ENCODE measurements at regions of chr15 and their contacts with region 1.

Region 1: DNA sequence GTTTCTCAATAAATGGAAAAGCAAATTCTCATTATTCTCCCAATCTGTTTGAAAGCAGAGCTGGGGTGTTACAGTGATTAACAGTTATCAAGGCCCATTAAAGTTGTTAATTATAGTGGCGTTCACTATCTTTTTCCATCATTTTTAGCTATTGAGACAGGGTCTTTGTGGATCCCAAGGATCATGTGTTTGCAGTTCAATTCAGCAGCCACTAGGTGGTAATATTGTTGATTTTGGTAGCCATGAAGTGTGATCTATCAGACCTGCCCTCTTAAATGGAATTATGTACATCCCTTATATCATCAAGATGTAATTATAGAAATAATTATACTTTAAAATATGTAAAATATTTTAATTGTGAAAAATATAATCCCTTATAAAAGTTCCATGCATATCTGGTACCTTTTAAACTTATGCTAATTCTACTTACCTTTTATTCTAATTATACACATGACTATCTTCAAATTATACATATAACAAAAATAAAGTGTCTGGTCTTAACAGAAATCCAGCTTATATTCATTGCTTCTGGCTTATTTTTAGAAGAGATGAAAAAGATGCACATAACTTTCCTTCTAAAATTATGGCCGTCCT is 126.4 kb downstream of the GREM1 start:
- DNase-seq: no peak
- H3K4me3 ChIP-seq: no peak overlapping the region
- CTCF ChIP-seq: peak; percentile 69

Region 2: DNA sequence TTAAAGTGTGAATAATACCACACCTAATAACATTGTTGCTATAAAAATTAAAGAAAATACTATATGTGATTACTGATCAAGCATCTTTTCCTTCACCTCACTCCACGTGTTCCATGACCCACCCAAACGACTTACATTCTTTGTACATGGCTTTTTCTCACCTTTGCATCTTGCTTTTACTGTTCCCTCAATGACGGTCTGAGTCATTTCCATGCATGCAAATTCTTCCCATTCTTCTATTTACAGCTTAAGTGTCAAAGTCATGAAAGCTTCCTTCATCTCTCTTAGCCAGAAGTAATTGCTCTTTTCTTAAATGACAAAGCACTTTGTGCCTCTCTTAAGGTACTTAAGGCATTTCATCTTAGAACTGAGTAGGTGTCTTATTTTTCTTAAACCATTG is 62.4 kb before region 1 on chr15:
- in situ Hi-C with region 1: no loop called
- DNase-seq: no peak
- H3K4me3 ChIP-seq: no peak overlapping the region
- CTCF ChIP-seq: no peak

Region 3: DNA sequence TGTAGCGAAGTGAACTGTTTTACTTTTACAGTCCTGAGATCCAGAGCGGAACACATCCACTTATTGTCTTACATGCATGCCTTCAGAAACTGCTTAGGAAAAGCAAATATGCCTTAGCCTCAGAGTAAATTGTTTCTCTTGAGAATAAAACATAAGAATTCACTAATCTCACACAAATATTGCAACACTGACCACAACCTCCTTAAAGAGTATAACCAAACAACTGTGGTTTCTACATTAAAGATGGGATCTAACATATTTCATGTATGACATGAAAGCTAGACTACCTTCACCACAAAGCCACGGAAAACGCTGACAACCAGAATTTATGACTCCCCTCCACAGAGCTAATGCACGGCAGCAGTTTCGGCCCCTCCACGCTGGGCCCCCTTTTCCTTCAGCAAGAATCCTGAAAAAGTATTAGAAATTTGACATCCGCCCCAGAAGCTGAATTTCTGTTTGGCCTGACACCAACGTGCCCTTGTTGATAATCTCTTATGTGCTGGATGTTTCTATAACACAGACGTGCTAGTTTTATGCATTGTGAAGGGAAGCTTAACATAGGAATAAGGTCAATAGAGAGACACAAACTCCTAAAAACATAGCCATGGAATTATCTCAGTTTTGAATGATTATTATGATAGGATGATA is 41.8 kb before region 1 on chr15:
- in situ Hi-C with region 1: no loop called
- DNase-seq: peak; percentile 96
- H3K4me3 ChIP-seq: no peak overlapping the region
- CTCF ChIP-seq: no peak

Region 4: DNA sequence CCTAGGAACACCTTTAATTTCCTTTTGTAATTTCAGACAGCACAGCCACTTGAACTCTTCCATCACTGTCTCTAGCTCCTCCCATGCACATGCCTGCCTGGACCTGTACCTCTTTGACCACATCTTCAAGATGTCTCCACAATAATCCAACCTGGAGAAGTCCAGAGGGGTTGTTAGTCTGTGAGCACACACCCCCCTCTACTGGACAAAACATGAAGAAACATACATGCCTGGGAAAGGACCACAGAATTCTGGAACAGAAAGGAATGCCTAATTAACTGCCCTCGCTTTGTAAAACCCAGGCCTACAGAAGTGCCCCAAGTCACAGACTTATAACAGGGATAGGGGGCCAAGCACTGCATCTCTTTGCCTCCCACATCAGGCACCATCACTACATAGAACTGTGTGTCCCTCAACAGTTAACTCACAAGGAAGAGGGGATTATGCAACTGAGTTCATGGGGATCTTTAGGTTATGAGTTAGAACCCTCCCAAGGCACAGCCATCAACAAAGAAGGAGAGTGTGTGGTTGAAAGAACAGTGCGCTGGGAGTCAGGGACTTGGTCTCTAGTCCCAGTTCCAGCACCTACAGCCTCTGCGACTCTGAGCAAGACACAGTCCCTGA is 288.6 kb after region 1 on chr15:
- in situ Hi-C with region 1: loop called (anchors 25 kb)
- DNase-seq: peak; percentile 60
- H3K4me3 ChIP-seq: no peak overlapping the region
- CTCF ChIP-seq: peak; percentile 79